B cell (primary cell): ENCODE measurements at regions of chr12 and their contacts with region 1.

Region 1: DNA sequence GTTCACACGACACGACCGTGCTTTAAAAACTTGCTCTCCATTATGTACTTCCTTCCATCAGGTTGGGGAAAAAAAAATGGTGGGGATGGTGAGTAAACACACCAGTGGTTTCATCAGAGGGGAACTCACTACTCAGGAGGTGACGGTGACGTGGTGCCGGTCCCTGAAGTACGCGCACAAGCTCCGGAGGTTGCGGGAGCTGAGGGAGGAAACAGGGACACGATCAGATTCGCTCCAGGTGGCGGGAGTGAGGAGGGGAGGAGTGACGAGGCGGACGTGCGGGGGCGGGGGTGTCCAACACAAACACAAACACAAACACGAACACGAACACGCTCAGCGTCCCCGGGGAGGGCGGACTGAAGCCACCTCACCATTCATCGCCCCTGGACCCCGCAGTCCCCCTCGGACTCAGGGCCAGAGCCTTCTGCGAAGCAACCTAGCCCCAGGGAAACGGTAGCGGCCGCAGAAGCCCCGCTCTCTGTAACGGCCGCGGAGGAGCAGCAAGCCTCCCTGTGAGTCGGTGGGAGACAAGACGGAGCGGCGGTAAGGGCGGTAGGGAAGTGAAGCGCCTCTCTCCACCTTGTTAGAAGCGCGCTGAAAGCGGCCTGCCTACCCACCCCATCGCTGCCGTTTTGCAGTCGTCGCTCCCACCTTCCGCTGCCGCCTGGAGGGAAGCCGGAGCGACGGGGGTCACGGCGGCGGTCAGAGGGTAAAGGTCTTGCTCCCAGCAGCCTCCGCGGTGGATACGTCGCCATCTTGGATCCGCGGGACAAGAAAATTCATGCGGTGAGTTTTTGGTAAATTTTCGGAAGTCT is at the start of gene CNOT2:
- DNase-seq: peak; percentile 93
- ATAC-seq: peak; percentile 88
- H3K4me3 ChIP-seq: peak within 1 kb of the TSS; percentile 75 to 92 (median 85)
- H3K4me3 Mint-ChIP-seq: peak within 1 kb of the TSS; percentile 96
- H3K27ac ChIP-seq: peak within 1 kb of the TSS; percentile 95 to 98
- H3K27ac Mint-ChIP-seq: peak within 1 kb of the TSS; percentile 97
- H3K4me1 ChIP-seq: peaks cover 20 to 33% of the 10 kb centered on the region in 2 donors
- H3K4me1 Mint-ChIP-seq: peaks cover 57% of the 10 kb centered on the region
- H3K27me3 ChIP-seq: no peaks in the 10 kb centered on the region
- H3K27me3 Mint-ChIP-seq: no peaks in the 10 kb centered on the region
- CTCF ChIP-seq: no peak
- total RNA-seq, gene CNOT2: 115 and 120 TPM in 2 replicates

Region 2: DNA sequence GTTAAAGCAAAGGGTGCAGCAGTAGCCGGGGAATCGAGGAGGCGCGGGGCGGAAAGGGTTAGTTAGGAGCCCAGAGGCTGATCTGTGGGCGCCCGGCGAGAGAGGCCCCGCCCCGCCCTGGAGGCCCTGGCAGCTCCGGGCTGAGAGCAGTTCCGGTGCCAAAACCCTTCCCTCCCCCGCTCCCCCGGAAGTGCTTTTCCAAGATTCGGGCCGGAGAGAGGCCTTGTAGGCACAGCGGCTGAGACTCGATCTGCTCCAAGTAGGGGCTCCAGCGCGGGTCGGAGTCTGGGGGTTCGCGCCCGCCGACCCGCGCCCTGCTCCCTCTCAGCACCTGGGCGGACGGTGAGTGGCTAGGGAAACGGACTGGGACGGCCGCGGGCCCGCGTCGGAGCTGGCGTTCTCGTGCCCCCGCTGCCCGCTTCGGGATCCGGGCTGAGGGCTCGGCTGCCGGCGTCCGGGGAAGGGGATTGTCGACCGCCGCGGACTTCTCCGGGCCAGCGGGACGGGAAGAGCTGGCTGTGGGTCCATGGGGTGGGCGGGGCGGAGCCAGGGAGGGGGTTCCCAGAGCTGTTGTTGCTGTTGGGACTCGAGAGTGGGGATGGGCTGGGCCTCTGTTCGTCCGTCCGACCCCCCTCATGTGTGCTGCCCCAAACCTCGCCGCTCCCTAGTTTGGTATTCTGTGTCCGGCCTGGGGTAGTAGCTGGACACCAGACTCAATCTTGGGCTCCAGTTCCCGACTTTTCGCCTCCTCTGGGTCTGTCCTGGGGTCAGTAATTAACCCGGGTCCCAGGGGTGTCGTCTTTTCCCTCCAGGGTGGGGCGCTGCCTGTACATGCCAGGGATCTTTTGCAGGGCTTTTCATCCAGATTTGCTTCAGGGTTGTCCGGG is 772.5 kb before region 1 on chr12 and contains the start of gene FRS2:
- CTCF ChIA-PET with region 1: no interaction called
- POLR2A ChIA-PET with region 1: no interaction called
- intact Hi-C with region 1: loop called (anchors 5 kb)
- DNase-seq: peak; percentile 84
- ATAC-seq: peak; percentile 94
- H3K4me3 ChIP-seq: peak within 1 kb of the TSS; percentile 48 to 99 (median 96)
- H3K4me3 Mint-ChIP-seq: peak within 1 kb of the TSS; percentile 98
- H3K27ac ChIP-seq: peak within 1 kb of the TSS; percentile 78 to 94
- H3K27ac Mint-ChIP-seq: peak within 1 kb of the TSS; percentile 97
- H3K4me1 ChIP-seq: peaks cover 44 to 56% of the 10 kb centered on the region in 2 donors
- H3K4me1 Mint-ChIP-seq: peaks cover 70% of the 10 kb centered on the region
- H3K27me3 ChIP-seq: no peaks in the 10 kb centered on the region
- H3K27me3 Mint-ChIP-seq: no peaks in the 10 kb centered on the region
- CTCF ChIP-seq: no peak
- total RNA-seq, gene FRS2: 29.5 and 33.7 TPM in 2 replicates

Region 3: DNA sequence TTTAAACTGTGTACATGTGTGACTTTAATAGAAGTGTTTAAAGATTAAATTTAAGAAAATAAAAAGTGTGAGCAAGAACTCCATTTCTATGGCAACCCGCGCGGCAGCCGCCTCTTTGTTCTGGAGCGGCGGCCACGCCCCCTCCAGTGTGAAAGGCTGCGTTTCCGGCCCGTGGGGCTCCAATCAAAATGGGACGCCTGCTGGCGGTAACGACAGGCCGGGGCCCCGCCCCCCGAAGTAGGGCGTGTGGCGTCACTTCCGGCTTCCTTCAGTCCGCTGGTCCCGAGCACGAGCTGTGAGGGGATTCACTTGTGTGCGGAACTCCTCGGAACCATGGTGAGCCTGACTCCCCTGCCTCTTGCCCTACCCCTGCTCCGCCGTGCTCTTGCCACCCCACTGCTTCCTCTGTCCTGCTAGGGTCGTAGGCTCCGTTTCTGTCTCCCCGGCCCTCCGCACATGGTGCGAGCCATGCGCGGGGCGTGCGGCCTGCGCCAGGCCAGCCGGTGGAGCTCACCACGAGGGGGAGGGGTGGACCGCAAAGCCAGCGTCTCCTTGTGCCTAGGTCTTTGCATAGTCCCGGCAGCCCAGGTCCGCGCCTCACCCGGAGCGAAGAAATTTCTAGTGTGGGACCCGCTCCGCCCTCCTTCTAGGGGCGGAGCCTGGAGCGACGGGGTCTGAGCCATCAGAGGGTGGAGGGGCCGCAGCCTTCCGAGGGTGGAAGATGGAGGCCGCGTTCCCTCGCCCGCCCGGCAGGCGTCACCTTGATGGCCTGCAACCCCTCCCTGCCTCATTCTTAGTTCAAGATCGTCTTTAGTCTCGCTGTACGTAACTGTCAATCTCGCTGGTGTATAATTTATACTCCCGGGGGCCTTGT is 657.5 kb before region 1 on chr12 and contains the start of gene CCT2:
- CTCF ChIA-PET with region 1: no interaction called
- POLR2A ChIA-PET with region 1: no interaction called
- intact Hi-C with region 1: loop called (anchors 5 kb)
- DNase-seq: peak; percentile 98
- ATAC-seq: peak; percentile 93
- H3K4me3 ChIP-seq: peak within 1 kb of the TSS; percentile 83 to 96 (median 90)
- H3K4me3 Mint-ChIP-seq: peak within 1 kb of the TSS; percentile 97
- H3K27ac ChIP-seq: peak within 1 kb of the TSS; percentile 91 to 97
- H3K27ac Mint-ChIP-seq: peak within 1 kb of the TSS; percentile 96
- H3K4me1 ChIP-seq: peaks cover 6 to 11% of the 10 kb centered on the region in 2 donors
- H3K4me1 Mint-ChIP-seq: peaks cover 12% of the 10 kb centered on the region
- H3K27me3 ChIP-seq: no peaks in the 10 kb centered on the region
- H3K27me3 Mint-ChIP-seq: no peaks in the 10 kb centered on the region
- CTCF ChIP-seq: peak; percentile 60
- total RNA-seq, gene CCT2: 125 TPM in 2 replicates

Region 4: GRCh38 chr12:70260646-70261045 is 17.7 kb after region 1 on chr12:
- CTCF ChIA-PET with region 1: no interaction called
- POLR2A ChIA-PET with region 1: no interaction called
- intact Hi-C with region 1: loop called (anchors 1 kb)
- DNase-seq: peak; percentile 54
- ATAC-seq: peak; percentile 39
- H3K4me3 ChIP-seq: no peak overlapping the region
- H3K4me3 Mint-ChIP-seq: peak overlapping the region; percentile 21
- H3K27ac ChIP-seq: peak overlapping the region in 1 of 2 donors; percentile 27
- H3K27ac Mint-ChIP-seq: peak overlapping the region; percentile 56
- H3K4me1 ChIP-seq: peaks cover 9 to 26% of the 10 kb centered on the region in 2 donors
- H3K4me1 Mint-ChIP-seq: peaks cover 67% of the 10 kb centered on the region
- H3K27me3 ChIP-seq: no peaks in the 10 kb centered on the region
- H3K27me3 Mint-ChIP-seq: no peaks in the 10 kb centered on the region
- CTCF ChIP-seq: no peak

Region 5: GRCh38 chr12:70277973-70278372 is 35.1 kb after region 1 on chr12:
- CTCF ChIA-PET with region 1: no interaction called
- POLR2A ChIA-PET with region 1: no interaction called
- intact Hi-C with region 1: loop called (anchors 5 kb)
- DNase-seq: no peak
- ATAC-seq: no peak
- H3K4me3 ChIP-seq: no peak overlapping the region
- H3K4me3 Mint-ChIP-seq: no peak overlapping the region
- H3K27ac ChIP-seq: no peak overlapping the region
- H3K27ac Mint-ChIP-seq: no peak overlapping the region
- H3K4me1 ChIP-seq: no peaks in the 10 kb centered on the region
- H3K4me1 Mint-ChIP-seq: peaks cover 20% of the 10 kb centered on the region
- H3K27me3 ChIP-seq: no peaks in the 10 kb centered on the region
- H3K27me3 Mint-ChIP-seq: no peaks in the 10 kb centered on the region
- CTCF ChIP-seq: no peak

Region 6: DNA sequence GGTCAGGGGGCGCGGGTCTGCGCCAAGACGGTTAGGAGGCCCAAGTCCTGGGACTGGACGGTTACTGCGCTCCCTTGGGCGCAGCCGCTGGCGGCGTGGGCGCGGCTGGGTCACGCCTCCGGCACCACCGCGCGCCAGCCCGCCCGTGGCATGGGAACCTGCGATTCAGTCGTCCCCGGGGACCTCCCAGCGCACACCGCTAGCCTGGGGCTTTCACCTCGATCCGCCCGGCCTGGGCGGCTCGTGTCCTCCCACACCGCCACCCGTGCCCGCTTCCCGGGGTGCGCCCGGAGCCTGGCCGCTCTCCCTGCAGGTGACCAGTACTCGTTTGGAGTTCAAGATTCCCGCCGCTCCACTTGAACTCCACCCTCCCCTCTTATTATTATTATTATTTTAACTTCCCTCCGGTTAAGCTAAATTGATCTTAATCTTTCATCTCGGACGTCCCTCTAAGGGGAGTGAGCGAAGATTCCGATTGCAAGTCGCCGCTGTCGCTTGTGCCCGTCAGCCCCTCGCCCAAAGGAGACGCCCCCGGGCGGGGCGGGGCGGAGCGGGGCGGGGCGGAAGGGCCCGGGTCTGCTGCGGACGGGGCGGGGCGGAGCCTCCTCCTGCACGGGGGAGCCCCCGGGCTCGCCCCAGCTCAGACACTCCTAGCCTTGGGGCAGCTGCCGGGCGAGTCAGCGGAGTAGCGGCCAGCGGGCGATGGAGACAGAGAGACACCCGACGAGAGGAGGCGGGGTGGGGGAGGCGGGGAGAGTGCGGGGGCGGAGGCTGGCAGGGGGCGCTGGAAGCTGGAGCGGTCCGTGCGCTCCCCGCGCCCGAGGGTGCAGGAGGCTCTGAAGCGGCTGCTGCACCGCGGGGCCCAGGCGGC is 123.0 kb after region 1 on chr12 and contains the start of gene KCNMB4:
- CTCF ChIA-PET with region 1: no interaction called
- POLR2A ChIA-PET with region 1: no interaction called
- intact Hi-C with region 1: loop called (anchors 2 kb)
- DNase-seq: peak; percentile 82
- ATAC-seq: peak; percentile 87
- H3K4me3 ChIP-seq: peak within 1 kb of the TSS; percentile 72 to 93 (median 76)
- H3K4me3 Mint-ChIP-seq: peak within 1 kb of the TSS; percentile 96
- H3K27ac ChIP-seq: peak within 1 kb of the TSS; percentile 15 to 41
- H3K27ac Mint-ChIP-seq: peak within 1 kb of the TSS; percentile 70
- H3K4me1 ChIP-seq: peaks cover 17 to 18% of the 10 kb centered on the region in 2 donors
- H3K4me1 Mint-ChIP-seq: peaks cover 18% of the 10 kb centered on the region
- H3K27me3 ChIP-seq: peaks cover 0 to 13% (median 9%) of the 10 kb centered on the region in 4 experiments
- H3K27me3 Mint-ChIP-seq: peaks cover 6% of the 10 kb centered on the region
- CTCF ChIP-seq: no peak
- total RNA-seq, gene KCNMB4: 0.67 and 0.80 TPM in 2 replicates